Caco-2 (cell line): ENCODE measurements at regions of chr12 and their contacts with region 1.

Region 1: GRCh38 chr12:48442191-48442828 is 30.0 kb upstream of the ANP32D start:
- DNase-seq: peak in 1 of 2 experiments; percentile 29
- H3K4me3 ChIP-seq: no peak overlapping the region
- H3K4me3 Mint-ChIP-seq: no peak overlapping the region
- H3K27ac Mint-ChIP-seq: peak overlapping the region; percentile 51
- H3K4me1 ChIP-seq: peaks cover 21% of the 10 kb centered on the region
- H3K4me1 Mint-ChIP-seq: peaks cover 27% of the 10 kb centered on the region
- H3K27me3 ChIP-seq: no peaks in the 10 kb centered on the region
- H3K27me3 Mint-ChIP-seq: no peaks in the 10 kb centered on the region
- CTCF ChIP-seq: peak in 1 of 2 experiments; percentile 34

Region 2: DNA sequence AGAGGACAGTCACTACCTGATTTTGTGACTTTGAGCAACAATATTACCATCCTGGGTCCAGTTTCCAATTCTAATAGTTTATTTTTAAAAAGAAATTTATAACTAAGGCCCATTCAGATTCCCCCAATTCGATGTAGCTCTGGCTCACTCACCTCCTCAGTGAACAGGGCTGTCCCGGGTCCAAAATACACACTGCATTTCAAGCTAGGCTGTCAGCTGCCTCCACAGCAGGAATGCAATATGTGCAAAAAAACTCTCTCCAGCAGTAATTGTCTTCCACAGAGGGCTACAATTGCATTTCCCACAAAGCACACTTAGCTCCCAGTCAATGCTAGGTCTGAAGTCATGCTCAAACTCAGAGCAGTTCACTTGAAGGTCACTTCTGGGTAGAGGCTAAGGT is 52.3 kb before region 1 on chr12:
- CTCF ChIA-PET with region 1: no interaction called
- POLR2A ChIA-PET with region 1: no interaction called
- intact Hi-C with region 1: loop called (anchors 10 kb)
- DNase-seq: no peak
- H3K4me3 ChIP-seq: no peak overlapping the region
- H3K4me3 Mint-ChIP-seq: no peak overlapping the region
- H3K27ac Mint-ChIP-seq: no peak overlapping the region
- H3K4me1 ChIP-seq: no peaks in the 10 kb centered on the region
- H3K4me1 Mint-ChIP-seq: no peaks in the 10 kb centered on the region
- H3K27me3 ChIP-seq: peaks cover 1% of the 10 kb centered on the region
- H3K27me3 Mint-ChIP-seq: peaks cover 25% of the 10 kb centered on the region
- CTCF ChIP-seq: no peak

Region 3: DNA sequence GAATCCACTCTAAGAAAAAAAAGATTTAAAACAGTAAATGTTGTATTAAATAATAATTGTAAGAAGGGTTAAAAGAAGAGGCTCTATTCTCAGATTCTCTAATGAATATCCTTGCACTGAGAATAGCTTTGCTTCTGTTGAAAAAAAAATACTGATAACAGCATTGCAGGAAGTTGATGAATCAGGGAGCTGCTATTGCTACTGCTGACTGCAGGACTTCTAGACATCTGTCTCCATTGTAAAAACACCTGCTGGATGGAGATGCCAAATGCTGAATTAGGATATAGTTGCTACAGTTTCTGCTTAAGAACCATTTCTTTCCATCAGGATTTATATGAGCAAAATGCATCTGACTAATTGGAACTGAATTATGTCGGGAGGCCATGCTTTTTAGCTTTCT is 20.2 kb before region 1 on chr12:
- CTCF ChIA-PET with region 1: no interaction called
- POLR2A ChIA-PET with region 1: no interaction called
- intact Hi-C with region 1: loop called (anchors 2 kb)
- DNase-seq: no peak
- H3K4me3 ChIP-seq: no peak overlapping the region
- H3K4me3 Mint-ChIP-seq: no peak overlapping the region
- H3K27ac Mint-ChIP-seq: no peak overlapping the region
- H3K4me1 ChIP-seq: peaks cover 45% of the 10 kb centered on the region
- H3K4me1 Mint-ChIP-seq: peaks cover 30% of the 10 kb centered on the region
- H3K27me3 ChIP-seq: no peaks in the 10 kb centered on the region
- H3K27me3 Mint-ChIP-seq: no peaks in the 10 kb centered on the region
- CTCF ChIP-seq: no peak